Mammary epithelial cell (primary cell): ENCODE measurements at regions of chr1 and their contacts with region 1.

Region 1: GRCh38 chr1:225845571-225846259 is 35.8 kb downstream of the EPHX1 start:
- DNase-seq: peak; percentile 56
- H3K4me3 ChIP-seq: no peak overlapping the region
- H3K27ac ChIP-seq: no peak overlapping the region
- H3K4me1 ChIP-seq: peaks cover 7% of the 10 kb centered on the region
- H3K27me3 ChIP-seq: no peaks in the 10 kb centered on the region
- CTCF ChIP-seq: peak; percentile 67 to 89

Region 2: DNA sequence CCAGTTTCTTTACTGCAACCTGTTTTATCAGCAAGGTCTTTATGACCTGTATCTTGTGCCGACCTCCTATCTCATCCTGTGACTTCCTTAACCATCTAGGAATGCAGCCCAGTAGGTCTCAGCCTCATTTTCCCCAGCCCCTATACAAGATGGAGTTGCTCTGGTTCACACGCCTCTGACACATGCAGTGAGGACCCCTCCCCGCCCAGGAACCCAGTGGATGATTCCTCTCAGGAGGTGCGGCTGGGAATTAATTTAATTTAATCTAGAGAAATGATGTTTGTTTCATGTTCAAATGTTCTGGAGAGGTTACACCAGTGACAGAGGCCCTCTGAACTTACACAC is 378.9 kb before region 1 on chr1:
- CTCF ChIA-PET with region 1: no interaction called
- dilution Hi-C with region 1: no loop called
- in situ Hi-C with region 1: no loop called
- intact Hi-C with region 1: loop called (anchors 1 kb)
- DNase-seq: no peak
- H3K4me3 ChIP-seq: no peak overlapping the region
- H3K27ac ChIP-seq: no peak overlapping the region
- H3K4me1 ChIP-seq: peaks cover 13% of the 10 kb centered on the region
- H3K27me3 ChIP-seq: no peaks in the 10 kb centered on the region
- CTCF ChIP-seq: no peak

Region 3: GRCh38 chr1:225480825-225481434 is 364.8 kb before region 1 on chr1:
- CTCF ChIA-PET with region 1: no interaction called
- dilution Hi-C with region 1: no loop called
- in situ Hi-C with region 1: no loop called
- intact Hi-C with region 1: loop called (anchors 1 kb)
- DNase-seq: peak; percentile 28
- H3K4me3 ChIP-seq: no peak overlapping the region
- H3K27ac ChIP-seq: no peak overlapping the region
- H3K4me1 ChIP-seq: no peaks in the 10 kb centered on the region
- H3K27me3 ChIP-seq: no peaks in the 10 kb centered on the region
- CTCF ChIP-seq: peak; percentile 93 to 95

Region 4: GRCh38 chr1:225554216-225554812 is 291.4 kb before region 1 on chr1:
- CTCF ChIA-PET with region 1: no interaction called
- dilution Hi-C with region 1: no loop called
- in situ Hi-C with region 1: no loop called
- intact Hi-C with region 1: loop called (anchors 5 kb)
- DNase-seq: no peak
- H3K4me3 ChIP-seq: no peak overlapping the region
- H3K27ac ChIP-seq: no peak overlapping the region
- H3K4me1 ChIP-seq: no peaks in the 10 kb centered on the region
- H3K27me3 ChIP-seq: no peaks in the 10 kb centered on the region
- CTCF ChIP-seq: peak; percentile 52 to 57